Mammary epithelial cell (primary cell): ENCODE measurements at regions of chr16 and their contacts with region 1.

Region 1: GRCh38 chr16:86570558-86571529 is 4.2 kb downstream of the FOXC2 start:
- DNase-seq: no peak
- H3K4me3 ChIP-seq: peak overlapping the region in 2 of 3 experiments; percentile 11 to 82
- H3K27ac ChIP-seq: no peak overlapping the region
- H3K4me1 ChIP-seq: no peaks in the 10 kb centered on the region
- H3K27me3 ChIP-seq: no peaks in the 10 kb centered on the region
- CTCF ChIP-seq: no peak

Region 2: GRCh38 chr16:86444261-86444660 is 126.6 kb before region 1 on chr16:
- CTCF ChIA-PET with region 1: no interaction called
- dilution Hi-C with region 1: no loop called
- in situ Hi-C with region 1: no loop called
- intact Hi-C with region 1: no loop called
- DNase-seq: no peak
- H3K4me3 ChIP-seq: no peak overlapping the region
- H3K27ac ChIP-seq: no peak overlapping the region
- H3K4me1 ChIP-seq: no peaks in the 10 kb centered on the region
- H3K27me3 ChIP-seq: no peaks in the 10 kb centered on the region
- CTCF ChIP-seq: no peak

Region 3: DNA sequence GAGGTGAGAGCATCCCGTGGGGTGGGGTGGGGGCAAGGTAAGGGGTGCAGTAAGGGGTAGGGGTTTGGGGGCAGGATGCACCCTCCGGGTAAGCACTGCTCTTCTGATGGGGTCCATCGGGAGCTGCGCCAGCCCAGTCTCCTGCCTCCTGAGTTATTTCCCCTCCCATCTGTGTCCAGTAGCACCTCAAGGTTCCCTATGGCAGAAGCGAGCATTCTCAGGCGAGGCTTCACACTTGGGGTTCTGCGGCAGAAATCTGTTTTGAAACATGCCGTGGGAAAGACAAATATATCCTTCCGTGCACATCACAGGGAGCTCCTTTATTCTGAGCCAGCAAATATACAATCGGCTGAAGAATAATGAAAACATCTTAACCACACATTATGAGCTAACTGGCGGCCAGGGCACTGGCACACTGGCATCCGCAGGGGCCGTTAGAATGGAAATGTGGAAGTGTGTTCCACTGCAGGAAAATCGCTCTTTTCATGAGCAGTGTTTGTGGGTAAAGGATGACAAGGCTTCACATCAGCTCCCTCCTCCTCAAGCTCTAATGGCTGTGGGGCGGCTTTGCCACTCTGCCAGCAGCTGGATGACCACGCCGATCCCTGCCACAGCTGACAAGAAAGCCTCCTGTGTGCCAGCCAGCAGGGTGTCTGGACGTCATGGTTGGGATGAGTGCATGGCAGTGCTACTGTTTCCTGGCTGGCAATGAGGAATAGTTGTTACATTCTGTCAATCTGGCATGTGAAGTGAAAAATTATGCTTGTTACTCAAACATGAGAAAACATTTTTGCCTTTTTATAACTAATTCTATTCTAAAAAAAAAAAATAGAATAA is 35.8 kb before region 1 on chr16:
- CTCF ChIA-PET with region 1: no interaction called
- dilution Hi-C with region 1: no loop called
- in situ Hi-C with region 1: no loop called
- intact Hi-C with region 1: no loop called
- DNase-seq: no peak
- H3K4me3 ChIP-seq: no peak overlapping the region
- H3K27ac ChIP-seq: no peak overlapping the region
- H3K4me1 ChIP-seq: no peaks in the 10 kb centered on the region
- H3K27me3 ChIP-seq: no peaks in the 10 kb centered on the region
- CTCF ChIP-seq: no peak

Region 4: DNA sequence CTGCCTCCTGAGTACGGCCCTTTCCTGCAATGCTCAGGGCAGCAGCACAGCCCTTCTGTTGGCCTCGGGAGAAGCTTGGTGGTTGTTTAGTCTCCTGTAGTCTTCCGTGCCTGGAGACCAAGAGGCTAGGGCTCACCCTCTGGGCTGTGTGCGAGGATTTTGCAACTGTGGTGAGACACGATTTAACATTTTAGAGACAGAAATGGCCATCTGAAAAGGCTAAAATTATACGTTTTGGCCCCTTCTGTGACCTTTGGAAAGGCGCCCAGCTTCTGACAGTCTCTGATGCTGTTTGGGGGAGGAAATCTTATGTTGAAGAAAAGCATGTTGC is 40.6 kb after region 1 on chr16:
- CTCF ChIA-PET with region 1: no interaction called
- dilution Hi-C with region 1: loop called (anchors 5 kb)
- in situ Hi-C with region 1: no loop called
- intact Hi-C with region 1: no loop called
- DNase-seq: no peak
- H3K4me3 ChIP-seq: no peak overlapping the region
- H3K27ac ChIP-seq: no peak overlapping the region
- H3K4me1 ChIP-seq: no peaks in the 10 kb centered on the region
- H3K27me3 ChIP-seq: no peaks in the 10 kb centered on the region
- CTCF ChIP-seq: no peak

Region 5: GRCh38 chr16:86809458-86809981 is 238.7 kb after region 1 on chr16:
- CTCF ChIA-PET with region 1: no interaction called
- dilution Hi-C with region 1: no loop called
- in situ Hi-C with region 1: loop called in 1 of 2 experiments (anchors 25 kb)
- intact Hi-C with region 1: loop called (anchors 1 kb)
- DNase-seq: peak; percentile 92
- H3K4me3 ChIP-seq: no peak overlapping the region
- H3K27ac ChIP-seq: no peak overlapping the region
- H3K4me1 ChIP-seq: peaks cover 25% of the 10 kb centered on the region
- H3K27me3 ChIP-seq: peaks cover 2% of the 10 kb centered on the region
- CTCF ChIP-seq: peak; percentile 23 to 49